Activated CD8-positive, alpha-beta T cell treated with anti-CD3 and anti-CD28 coated beads, Interleukin-2, amount 10 ng/mL, durations not matched to agents 7 days and 5 days (primary cell): ENCODE measurements at regions of chr5 and their contacts with region 1.

Region 1: GRCh38 chr5:39217365-39218281 is 1.7 kb downstream of the FYB1 start:
- DNase-seq: peak; percentile 89
- ATAC-seq: peak; percentile 77
- H3K4me3 Mint-ChIP-seq: peak overlapping the region; percentile 68
- H3K27ac Mint-ChIP-seq: peak overlapping the region; percentile 80
- H3K4me1 Mint-ChIP-seq: peaks cover 55% of the 10 kb centered on the region
- H3K27me3 Mint-ChIP-seq: no peaks in the 10 kb centered on the region

Region 2: DNA sequence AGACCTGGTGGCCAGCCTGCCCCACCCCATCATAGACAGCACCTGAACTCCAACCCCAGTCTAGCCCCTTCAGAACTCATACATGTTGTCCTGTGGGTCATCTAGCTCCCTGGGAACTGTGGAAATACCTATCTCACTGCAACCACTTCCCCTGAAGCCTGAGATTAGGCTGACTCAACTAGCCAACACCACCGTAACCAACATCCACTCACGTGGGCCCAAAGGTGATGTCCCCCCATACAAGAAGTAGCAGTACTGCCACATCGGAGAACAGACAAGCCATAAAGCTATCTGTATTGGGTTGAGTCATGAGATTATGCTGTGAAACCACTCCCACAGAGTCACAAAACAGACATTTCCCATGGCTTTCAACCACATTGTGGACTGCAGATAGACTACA is 325.3 kb before region 1 on chr5:
- CTCF ChIA-PET with region 1: no interaction called
- POLR2A ChIA-PET with region 1: no interaction called
- DNase-seq: no peak
- ATAC-seq: no peak
- H3K4me3 Mint-ChIP-seq: no peak overlapping the region
- H3K27ac Mint-ChIP-seq: no peak overlapping the region
- H3K4me1 Mint-ChIP-seq: no peaks in the 10 kb centered on the region
- H3K27me3 Mint-ChIP-seq: peaks cover 21% of the 10 kb centered on the region

Region 3: GRCh38 chr5:39091940-39092580 is 125.6 kb before region 1 on chr5:
- CTCF ChIA-PET with region 1: no interaction called
- POLR2A ChIA-PET with region 1: no interaction called
- DNase-seq: no peak
- ATAC-seq: no peak
- H3K4me3 Mint-ChIP-seq: no peak overlapping the region
- H3K27ac Mint-ChIP-seq: no peak overlapping the region
- H3K4me1 Mint-ChIP-seq: peaks cover under 1% of the 10 kb centered on the region
- H3K27me3 Mint-ChIP-seq: peaks cover 31% of the 10 kb centered on the region

Region 4: DNA sequence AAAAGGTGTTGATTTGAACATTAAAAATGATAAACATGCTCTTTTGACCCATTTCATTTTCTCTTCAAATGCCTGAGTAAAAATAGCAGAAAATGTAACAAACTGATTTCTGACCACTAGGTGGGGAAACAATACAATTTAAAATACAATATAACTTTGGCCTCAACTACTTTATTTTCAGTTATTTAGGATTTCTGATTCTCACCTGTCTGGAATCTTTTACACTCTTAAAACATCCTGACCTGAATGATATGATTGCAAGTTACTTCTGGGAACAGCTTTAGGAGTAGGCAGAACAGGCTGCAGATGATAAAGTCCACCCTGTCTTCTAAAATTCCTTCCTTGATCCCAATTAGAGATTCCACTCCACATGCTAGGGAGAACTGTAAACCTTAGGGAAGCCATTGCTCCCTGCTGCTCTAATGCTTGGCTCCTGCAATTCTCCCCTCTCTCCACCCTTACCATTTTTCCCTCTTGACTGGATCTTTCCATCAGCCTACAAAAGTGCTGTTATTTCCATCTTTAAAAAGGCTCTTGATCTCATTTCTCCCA is 68.6 kb before region 1 on chr5:
- CTCF ChIA-PET with region 1: interaction called, 46 read pairs
- POLR2A ChIA-PET with region 1: no interaction called
- DNase-seq: no peak
- ATAC-seq: peak; percentile 18
- H3K4me3 Mint-ChIP-seq: no peak overlapping the region
- H3K27ac Mint-ChIP-seq: peak overlapping the region; percentile 64
- H3K4me1 Mint-ChIP-seq: peaks cover 45% of the 10 kb centered on the region
- H3K27me3 Mint-ChIP-seq: no peaks in the 10 kb centered on the region

Region 5: DNA sequence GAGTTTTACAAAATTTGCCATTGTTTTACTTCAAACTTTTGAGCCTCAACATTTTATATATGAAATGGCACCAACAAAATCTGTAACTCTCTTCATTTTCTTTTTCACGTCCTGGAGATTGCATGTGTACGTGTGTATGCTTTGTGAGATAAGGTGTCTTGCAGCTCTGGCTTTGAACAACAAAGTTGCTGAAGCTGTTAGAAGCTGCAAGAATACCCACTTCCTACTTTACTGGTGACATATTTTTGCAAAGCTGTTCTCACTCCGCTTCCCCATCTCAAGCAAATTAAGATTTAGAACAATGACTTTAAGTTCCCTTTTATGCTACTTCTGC is 40.0 kb before region 1 on chr5:
- CTCF ChIA-PET with region 1: interaction called, 28 read pairs
- POLR2A ChIA-PET with region 1: interaction called, 9 read pairs
- DNase-seq: no peak
- ATAC-seq: peak; percentile 48
- H3K4me3 Mint-ChIP-seq: peak overlapping the region; percentile 64
- H3K27ac Mint-ChIP-seq: peak overlapping the region; percentile 87
- H3K4me1 Mint-ChIP-seq: peaks cover 95% of the 10 kb centered on the region
- H3K27me3 Mint-ChIP-seq: no peaks in the 10 kb centered on the region

Region 6: DNA sequence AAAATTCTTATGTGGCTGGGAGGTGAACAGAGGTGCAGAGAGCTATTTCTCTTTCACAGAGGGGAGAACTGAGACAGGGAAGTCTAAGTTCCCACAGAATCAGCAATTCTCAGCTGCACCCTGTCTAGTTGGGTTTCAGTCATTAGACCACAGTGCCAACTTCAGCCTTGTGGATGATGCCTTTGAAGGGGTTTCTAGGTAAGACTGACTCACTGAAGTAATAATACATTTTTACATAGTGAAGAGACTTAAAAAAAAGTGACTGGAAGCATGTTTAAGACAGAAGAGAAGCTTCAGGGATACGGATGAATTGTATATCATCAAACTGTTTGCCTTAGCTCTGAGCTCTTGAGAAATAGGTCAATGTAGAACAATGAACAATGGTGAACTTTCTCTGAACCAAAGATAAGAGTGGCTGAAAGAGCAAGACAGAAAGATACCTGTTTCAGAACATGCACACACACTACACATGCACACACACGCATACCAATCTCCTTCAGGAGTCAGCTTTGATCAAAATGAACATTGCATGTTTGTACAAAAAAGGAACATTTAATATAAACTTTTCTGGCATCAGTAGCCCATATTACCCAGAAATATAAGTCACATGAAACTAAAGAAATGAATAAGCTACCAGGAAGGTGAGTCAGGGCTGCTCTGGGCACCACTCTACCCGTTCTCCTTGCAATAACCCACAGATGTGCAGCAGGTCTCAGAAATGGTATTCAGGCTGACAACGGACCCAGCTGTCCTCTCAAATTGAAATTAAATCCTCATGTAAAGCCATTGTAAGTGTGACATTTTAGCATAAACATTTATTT is 14.3 kb after region 1 on chr5:
- CTCF ChIA-PET with region 1: interaction called, 108 read pairs
- POLR2A ChIA-PET with region 1: interaction called, 3 read pairs
- DNase-seq: no peak
- ATAC-seq: peak; percentile 86
- H3K4me3 Mint-ChIP-seq: peak overlapping the region; percentile 29
- H3K27ac Mint-ChIP-seq: peak overlapping the region; percentile 73
- H3K4me1 Mint-ChIP-seq: peaks cover 18% of the 10 kb centered on the region
- H3K27me3 Mint-ChIP-seq: no peaks in the 10 kb centered on the region

Region 7: GRCh38 chr5:39256477-39257235 is 39.0 kb after region 1 on chr5:
- CTCF ChIA-PET with region 1: interaction called, 14 read pairs
- POLR2A ChIA-PET with region 1: no interaction called
- DNase-seq: no peak
- ATAC-seq: peak; percentile 55
- H3K4me3 Mint-ChIP-seq: peak overlapping the region; percentile 42
- H3K27ac Mint-ChIP-seq: no peak overlapping the region
- H3K4me1 Mint-ChIP-seq: peaks cover 10% of the 10 kb centered on the region
- H3K27me3 Mint-ChIP-seq: no peaks in the 10 kb centered on the region

Region 8: DNA sequence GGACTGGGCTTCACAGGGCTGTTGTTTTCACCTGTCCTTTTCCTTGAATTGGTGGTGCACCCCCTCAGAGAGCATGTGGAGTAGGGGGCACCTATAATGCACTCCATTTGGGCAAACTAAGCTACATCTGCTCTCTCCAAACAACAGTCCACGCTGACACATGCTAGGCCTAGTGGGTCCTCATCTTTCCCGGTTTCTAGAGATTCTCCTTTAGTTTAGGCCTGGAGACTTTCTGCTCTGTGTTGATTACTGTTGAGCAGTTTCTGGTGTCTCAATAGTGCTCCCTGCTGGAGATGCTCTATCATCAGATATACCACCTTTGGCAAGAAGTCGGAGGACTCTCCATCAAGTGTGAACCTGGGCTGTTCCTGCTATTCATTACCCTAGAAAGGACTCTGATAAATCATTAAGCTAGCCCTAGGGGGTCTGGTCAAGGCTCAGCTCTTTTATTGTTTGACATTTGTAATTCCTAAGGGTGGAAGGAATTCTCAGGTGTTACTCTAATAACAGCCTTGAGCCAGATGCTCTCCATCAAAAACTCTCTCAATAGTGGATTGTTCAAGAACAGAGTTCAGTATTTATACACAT is 65.7 kb after region 1 on chr5:
- CTCF ChIA-PET with region 1: interaction called, 319 read pairs
- POLR2A ChIA-PET with region 1: interaction called, 12 read pairs
- DNase-seq: peak; percentile 81
- ATAC-seq: peak; percentile 100
- H3K4me3 Mint-ChIP-seq: no peak overlapping the region
- H3K27ac Mint-ChIP-seq: no peak overlapping the region
- H3K4me1 Mint-ChIP-seq: peaks cover 22% of the 10 kb centered on the region
- H3K27me3 Mint-ChIP-seq: peaks cover 3% of the 10 kb centered on the region